ENCODE measurements at regions of chr6 and their contacts with region 1.

Region 1: GRCh38 chr6:24274441-24275083 is 83.3 kb downstream of the DCDC2 start:
- DNase-seq: no peak
- H3K4me3 Mint-ChIP-seq: no peak overlapping the region
- H3K27ac Mint-ChIP-seq: no peak overlapping the region
- H3K4me1 Mint-ChIP-seq: peaks cover 40% of the 10 kb centered on the region
- H3K27me3 Mint-ChIP-seq: no peaks in the 10 kb centered on the region
- CTCF ChIP-seq: peak; percentile 68

Region 2: DNA sequence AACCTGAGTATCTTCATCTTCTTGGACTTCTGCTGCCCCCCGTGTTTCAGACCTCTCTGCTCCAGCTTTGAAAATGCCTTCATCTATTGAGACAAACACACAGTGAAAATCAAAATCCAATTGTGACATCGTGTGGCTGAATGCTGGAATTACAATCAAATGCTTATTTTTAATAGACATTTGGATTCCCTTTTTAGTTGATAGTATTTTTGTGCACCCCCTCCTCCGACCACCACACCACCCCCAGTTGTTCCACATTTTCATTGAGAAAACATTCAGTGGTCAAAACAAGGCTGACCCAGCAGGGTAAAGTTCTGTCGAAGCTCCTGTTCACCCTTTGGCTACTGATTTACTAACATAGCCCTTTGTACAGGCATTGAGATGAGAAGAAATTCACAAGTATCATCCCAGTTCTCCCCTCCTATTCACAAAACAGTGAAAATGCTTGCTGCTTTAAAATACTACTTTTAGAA is 69.5 kb before region 1 on chr6:
- CTCF ChIA-PET with region 1: interaction called, 4 read pairs
- intact Hi-C with region 1: loop called (anchors 5 kb)
- DNase-seq: peak; percentile 50
- H3K4me3 Mint-ChIP-seq: no peak overlapping the region
- H3K27ac Mint-ChIP-seq: no peak overlapping the region
- H3K4me1 Mint-ChIP-seq: peaks cover 31% of the 10 kb centered on the region
- H3K27me3 Mint-ChIP-seq: no peaks in the 10 kb centered on the region
- CTCF ChIP-seq: peak; percentile 79